MCF 10A (cell line): ENCODE measurements at regions of chr11 and their contacts with region 1.

Region 1: GRCh38 chr11:73350908-73351636 is 25.1 kb upstream of the RELT start:
- DNase-seq: peak; percentile 72
- H3K4me3 Mint-ChIP-seq: no peak overlapping the region
- H3K27ac Mint-ChIP-seq: no peak overlapping the region
- H3K4me1 Mint-ChIP-seq: no peaks in the 10 kb centered on the region
- H3K27me3 Mint-ChIP-seq: no peaks in the 10 kb centered on the region
- CTCF ChIP-seq: peak; percentile 89

Region 2: DNA sequence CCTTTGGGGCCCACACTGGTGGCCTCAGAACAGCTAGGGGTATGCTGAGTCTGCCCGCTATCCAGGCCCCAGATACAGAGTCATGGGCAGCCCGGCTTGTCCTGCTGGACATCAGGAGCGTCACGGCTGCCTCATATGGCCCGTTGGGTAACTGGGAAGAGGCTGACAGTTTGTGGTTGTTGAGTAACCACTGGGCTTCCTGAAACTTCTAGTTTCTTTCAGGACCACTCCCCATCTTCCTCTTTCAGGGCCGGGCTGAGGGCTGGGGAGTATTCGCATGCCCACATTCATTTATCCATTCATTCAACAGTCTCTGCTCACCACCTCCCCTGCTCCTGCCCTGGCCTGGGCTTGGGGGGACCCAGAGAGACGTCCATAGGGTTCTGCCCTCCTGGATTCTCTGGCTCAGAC is 146.4 kb before region 1 on chr11:
- CTCF ChIA-PET with region 1: no interaction called
- POLR2A ChIA-PET with region 1: no interaction called
- intact Hi-C with region 1: no loop called
- DNase-seq: no peak
- H3K4me3 Mint-ChIP-seq: no peak overlapping the region
- H3K27ac Mint-ChIP-seq: no peak overlapping the region
- H3K4me1 Mint-ChIP-seq: peaks cover 20% of the 10 kb centered on the region
- H3K27me3 Mint-ChIP-seq: no peaks in the 10 kb centered on the region
- CTCF ChIP-seq: no peak

Region 3: GRCh38 chr11:73288873-73289707 is 62.0 kb before region 1 on chr11:
- CTCF ChIA-PET with region 1: interaction called, 11 read pairs
- POLR2A ChIA-PET with region 1: no interaction called
- intact Hi-C with region 1: no loop called
- DNase-seq: peak; percentile 72
- H3K4me3 Mint-ChIP-seq: no peak overlapping the region
- H3K27ac Mint-ChIP-seq: no peak overlapping the region
- H3K4me1 Mint-ChIP-seq: peaks cover 6% of the 10 kb centered on the region
- H3K27me3 Mint-ChIP-seq: no peaks in the 10 kb centered on the region
- CTCF ChIP-seq: peak; percentile 97

Region 4: GRCh38 chr11:73376160-73376802 is 25.2 kb after region 1 on chr11 and contains the start of gene RELT:
- CTCF ChIA-PET with region 1: interaction called, 20 read pairs
- POLR2A ChIA-PET with region 1: interaction called, 3 read pairs
- intact Hi-C with region 1: no loop called
- DNase-seq: peak; percentile 88
- H3K4me3 Mint-ChIP-seq: peak within 1 kb of the TSS; percentile 80
- H3K27ac Mint-ChIP-seq: peak within 1 kb of the TSS; percentile 29
- H3K4me1 Mint-ChIP-seq: peaks cover 18% of the 10 kb centered on the region
- H3K27me3 Mint-ChIP-seq: no peaks in the 10 kb centered on the region
- CTCF ChIP-seq: peak; percentile 90
- total RNA-seq, gene RELT: 5.8 and 8.4 TPM in 2 replicates

Region 5: GRCh38 chr11:73393479-73394380 is 42.7 kb after region 1 on chr11:
- CTCF ChIA-PET with region 1: interaction called, 23 read pairs
- POLR2A ChIA-PET with region 1: interaction called, 5 read pairs
- intact Hi-C with region 1: loop called (anchors 1 kb)
- DNase-seq: peak; percentile 78
- H3K4me3 Mint-ChIP-seq: no peak overlapping the region
- H3K27ac Mint-ChIP-seq: no peak overlapping the region
- H3K4me1 Mint-ChIP-seq: peaks cover 14% of the 10 kb centered on the region
- H3K27me3 Mint-ChIP-seq: no peaks in the 10 kb centered on the region
- CTCF ChIP-seq: peak; percentile 55

Region 6: GRCh38 chr11:73475549-73476095 is 124.5 kb after region 1 on chr11:
- CTCF ChIA-PET with region 1: no interaction called
- POLR2A ChIA-PET with region 1: no interaction called
- intact Hi-C with region 1: no loop called
- DNase-seq: no peak
- H3K4me3 Mint-ChIP-seq: no peak overlapping the region
- H3K27ac Mint-ChIP-seq: no peak overlapping the region
- H3K4me1 Mint-ChIP-seq: peaks cover 10% of the 10 kb centered on the region
- H3K27me3 Mint-ChIP-seq: no peaks in the 10 kb centered on the region
- CTCF ChIP-seq: no peak

Region 7: DNA sequence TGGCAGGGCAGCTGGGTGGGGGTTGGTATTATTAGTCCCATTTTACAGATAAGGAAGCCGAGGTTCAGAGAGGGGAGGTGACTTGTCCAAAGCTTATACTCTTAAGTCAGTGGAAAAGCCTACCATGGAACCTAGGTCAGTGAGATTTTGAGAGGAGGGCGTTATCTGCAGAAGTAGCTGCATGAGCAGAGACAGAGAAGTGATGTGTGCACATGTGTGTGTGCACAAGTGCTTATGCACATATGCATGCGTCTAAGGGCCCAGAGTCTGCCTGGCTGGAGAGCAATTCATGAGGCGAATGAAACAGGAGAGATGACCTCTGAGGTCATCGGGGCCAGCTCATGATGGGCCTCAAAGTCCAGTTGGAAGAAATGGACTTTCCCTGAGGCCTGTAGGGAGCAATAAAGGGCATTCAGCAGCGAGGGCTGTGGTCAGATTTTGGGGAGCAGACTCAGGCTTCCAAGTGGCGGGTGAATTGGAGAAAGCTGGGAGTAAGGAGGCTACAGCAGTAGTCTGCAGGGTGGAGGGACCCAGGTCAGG is 303.5 kb after region 1 on chr11:
- CTCF ChIA-PET with region 1: interaction called, 62 read pairs
- POLR2A ChIA-PET with region 1: interaction called, 4 read pairs
- intact Hi-C with region 1: no loop called
- DNase-seq: no peak
- H3K4me3 Mint-ChIP-seq: no peak overlapping the region
- H3K27ac Mint-ChIP-seq: no peak overlapping the region
- H3K4me1 Mint-ChIP-seq: no peaks in the 10 kb centered on the region
- H3K27me3 Mint-ChIP-seq: peaks cover 8% of the 10 kb centered on the region
- CTCF ChIP-seq: no peak